AG04450 (cell line): ENCODE measurements at regions of chr12 and their contacts with region 1.

Region 1: DNA sequence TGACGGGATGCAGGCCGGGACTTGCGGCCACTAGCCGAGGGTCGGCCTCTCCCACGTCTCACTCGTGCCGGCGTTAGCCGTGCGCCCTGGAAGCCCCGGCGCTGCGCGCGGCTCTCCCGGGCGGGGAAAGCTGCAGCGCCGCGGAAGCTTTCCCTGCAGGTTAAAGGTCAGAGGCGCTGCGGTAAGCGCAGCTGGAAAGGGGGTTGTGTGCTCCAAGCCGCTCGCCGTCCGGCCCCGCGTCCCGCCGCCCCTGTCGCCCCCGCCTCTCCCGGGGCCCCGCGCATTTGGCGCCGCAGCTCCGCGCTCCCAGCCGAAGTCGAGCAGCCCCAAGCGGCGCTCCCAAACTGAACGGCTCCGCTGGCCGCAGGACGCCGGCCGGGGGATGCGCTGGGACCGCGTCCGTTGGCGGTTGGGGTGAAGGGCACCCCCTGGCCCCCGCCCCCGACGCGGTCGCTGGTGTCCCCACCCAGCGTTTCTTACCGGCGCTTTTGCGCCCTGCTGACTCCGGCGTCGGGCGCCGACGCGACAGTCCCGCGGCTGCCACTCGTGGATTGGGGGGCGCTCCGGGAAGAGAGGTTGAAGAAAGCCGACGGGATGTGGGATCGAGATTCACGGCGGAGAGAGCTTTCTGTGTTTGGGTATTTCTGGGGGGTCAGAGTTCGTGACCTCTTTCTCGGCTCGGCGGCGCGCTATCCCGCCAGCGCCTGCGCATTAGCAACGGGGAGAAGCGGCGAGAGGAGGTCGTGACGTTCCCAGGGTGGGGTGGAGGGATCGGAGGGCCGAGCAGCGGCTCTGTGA is at the start of gene NR2C1:
- DNase-seq: peak; percentile 77
- H3K4me3 ChIP-seq: peak within 1 kb of the TSS; percentile 82
- H3K27ac ChIP-seq: peak within 1 kb of the TSS; percentile 68
- H3K27me3 ChIP-seq: no peaks in the 10 kb centered on the region
- CTCF ChIP-seq: no peak
- polyA plus RNA-seq, gene NR2C1: 28.9 and 32.8 TPM in 2 replicates

Region 2: GRCh38 chr12:95083938-95084337 is 10.8 kb after region 1 on chr12:
- CTCF ChIA-PET with region 1: interaction called, 17 read pairs
- POLR2A ChIA-PET with region 1: interaction called, 4 read pairs
- DNase-seq: peak; percentile 66
- H3K4me3 ChIP-seq: no peak overlapping the region
- H3K27ac ChIP-seq: no peak overlapping the region
- H3K27me3 ChIP-seq: no peaks in the 10 kb centered on the region
- CTCF ChIP-seq: no peak

Region 3: DNA sequence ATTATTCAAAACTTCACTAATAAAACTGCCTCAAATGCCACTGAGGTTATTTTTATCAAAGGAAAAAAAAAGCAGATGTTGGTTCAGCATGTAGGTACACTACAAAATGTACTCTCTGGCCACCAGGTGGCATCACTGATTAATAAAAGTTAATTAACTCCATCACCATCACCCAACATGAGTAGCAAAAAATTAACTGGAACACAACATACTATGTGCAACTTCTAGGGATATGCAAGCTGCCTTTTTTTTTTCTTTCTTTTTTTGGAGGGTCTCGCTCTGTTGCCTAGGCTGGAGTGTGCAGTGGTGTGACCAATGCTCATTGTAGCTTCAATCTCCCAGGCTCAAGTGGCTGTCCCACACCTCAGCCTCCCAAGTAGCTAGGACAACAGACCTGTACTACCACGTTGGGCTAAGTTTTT is 44.1 kb after region 1 on chr12:
- CTCF ChIA-PET with region 1: interaction called, 10 read pairs
- POLR2A ChIA-PET with region 1: no interaction called
- DNase-seq: peak; percentile 47
- H3K4me3 ChIP-seq: no peak overlapping the region
- H3K27ac ChIP-seq: no peak overlapping the region
- H3K27me3 ChIP-seq: no peaks in the 10 kb centered on the region
- CTCF ChIP-seq: peak; percentile 60